ENCODE measurements at regions of chr12 and their contacts with region 1.

Region 1: GRCh38 chr12:84874125-84874824 is 38.3 kb downstream of the SLC6A15 start:
- DNase-seq: peak; percentile 5 to 43 (median 18)
- ATAC-seq: peak; percentile 76; the same call in 2 of the 3 replicates
- H3K4me3 ChIP-seq: no peak overlapping the region
- H3K27ac ChIP-seq: no peak overlapping the region
- H3K4me1 ChIP-seq: no peaks in the 10 kb centered on the region
- H3K27me3 ChIP-seq: no peaks in the 10 kb centered on the region
- CTCF ChIP-seq: peak; percentile 23 to 70 (median 49); a peak in 4 of 6 replicates
- EP300 ChIP-seq: no peak
- POLR2A ChIP-seq: no peak
- RAD21 ChIP-seq: peak; percentile 69 to 84

Region 2: DNA sequence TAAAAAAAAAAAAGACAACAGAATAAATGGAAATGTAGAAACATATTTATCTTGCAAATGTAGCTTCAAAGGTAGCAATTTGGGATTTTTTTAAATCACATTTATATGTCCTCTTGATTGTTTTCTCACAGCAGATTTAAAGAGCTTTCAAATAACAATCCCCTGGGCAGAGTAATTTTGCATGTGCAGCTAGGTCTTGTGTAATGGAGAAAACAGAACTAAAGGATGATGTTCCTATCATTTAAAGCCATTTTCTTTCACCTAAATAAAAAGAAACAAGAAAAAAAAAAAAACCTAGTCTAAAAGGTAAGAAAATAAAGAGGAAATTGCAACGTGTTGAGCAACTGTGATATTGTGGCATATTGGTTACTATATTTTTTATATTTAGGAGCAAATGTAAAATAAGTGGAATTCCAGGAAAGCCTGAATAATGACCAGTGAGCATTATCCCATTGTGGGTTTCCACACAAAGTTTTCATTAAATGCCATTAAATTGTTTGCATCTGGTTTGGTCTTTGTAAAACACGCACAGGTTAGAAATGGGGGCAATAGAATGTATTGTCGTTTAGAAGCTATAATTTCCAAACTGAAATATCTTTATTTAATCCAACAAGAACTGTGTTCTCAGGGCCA is 177.3 kb before region 1 on chr12:
- CTCF ChIA-PET with region 1: no interaction called
- POLR2A ChIA-PET with region 1: no interaction called
- in situ Hi-C with region 1: no loop called
- intact Hi-C with region 1: no loop called
- DNase-seq: no peak
- ATAC-seq: no peak
- H3K4me3 ChIP-seq: no peak overlapping the region
- H3K27ac ChIP-seq: no peak overlapping the region
- H3K4me1 ChIP-seq: no peaks in the 10 kb centered on the region
- H3K27me3 ChIP-seq: no peaks in the 10 kb centered on the region
- CTCF ChIP-seq: no peak
- EP300 ChIP-seq: no peak
- POLR2A ChIP-seq: no peak
- RAD21 ChIP-seq: no peak

Region 3: DNA sequence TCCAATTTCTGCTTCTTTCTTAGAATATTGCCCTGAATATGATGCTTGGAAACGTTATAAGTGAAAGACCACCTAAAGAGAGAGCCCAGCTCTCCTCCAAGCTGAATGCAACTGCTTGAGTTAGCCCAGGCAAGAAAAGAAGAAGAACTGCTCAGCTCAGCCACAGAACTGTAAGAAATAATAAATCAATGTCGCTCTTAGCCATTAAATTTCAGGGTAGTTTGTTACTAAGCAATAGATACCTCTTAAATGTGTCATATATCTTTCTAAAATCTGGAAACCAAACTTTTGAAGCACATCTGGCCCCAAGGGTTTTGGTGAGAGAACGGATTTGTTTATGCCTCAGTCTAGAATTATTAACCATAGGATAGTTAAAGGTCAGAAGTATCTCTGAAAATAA is 12.1 kb before region 1 on chr12:
- CTCF ChIA-PET with region 1: no interaction called
- POLR2A ChIA-PET with region 1: no interaction called
- in situ Hi-C with region 1: no loop called
- intact Hi-C with region 1: no loop called
- DNase-seq: no peak
- ATAC-seq: no peak
- H3K4me3 ChIP-seq: no peak overlapping the region
- H3K27ac ChIP-seq: no peak overlapping the region
- H3K4me1 ChIP-seq: no peaks in the 10 kb centered on the region
- H3K27me3 ChIP-seq: no peaks in the 10 kb centered on the region
- CTCF ChIP-seq: no peak
- EP300 ChIP-seq: no peak
- POLR2A ChIP-seq: no peak
- RAD21 ChIP-seq: no peak

Region 4: DNA sequence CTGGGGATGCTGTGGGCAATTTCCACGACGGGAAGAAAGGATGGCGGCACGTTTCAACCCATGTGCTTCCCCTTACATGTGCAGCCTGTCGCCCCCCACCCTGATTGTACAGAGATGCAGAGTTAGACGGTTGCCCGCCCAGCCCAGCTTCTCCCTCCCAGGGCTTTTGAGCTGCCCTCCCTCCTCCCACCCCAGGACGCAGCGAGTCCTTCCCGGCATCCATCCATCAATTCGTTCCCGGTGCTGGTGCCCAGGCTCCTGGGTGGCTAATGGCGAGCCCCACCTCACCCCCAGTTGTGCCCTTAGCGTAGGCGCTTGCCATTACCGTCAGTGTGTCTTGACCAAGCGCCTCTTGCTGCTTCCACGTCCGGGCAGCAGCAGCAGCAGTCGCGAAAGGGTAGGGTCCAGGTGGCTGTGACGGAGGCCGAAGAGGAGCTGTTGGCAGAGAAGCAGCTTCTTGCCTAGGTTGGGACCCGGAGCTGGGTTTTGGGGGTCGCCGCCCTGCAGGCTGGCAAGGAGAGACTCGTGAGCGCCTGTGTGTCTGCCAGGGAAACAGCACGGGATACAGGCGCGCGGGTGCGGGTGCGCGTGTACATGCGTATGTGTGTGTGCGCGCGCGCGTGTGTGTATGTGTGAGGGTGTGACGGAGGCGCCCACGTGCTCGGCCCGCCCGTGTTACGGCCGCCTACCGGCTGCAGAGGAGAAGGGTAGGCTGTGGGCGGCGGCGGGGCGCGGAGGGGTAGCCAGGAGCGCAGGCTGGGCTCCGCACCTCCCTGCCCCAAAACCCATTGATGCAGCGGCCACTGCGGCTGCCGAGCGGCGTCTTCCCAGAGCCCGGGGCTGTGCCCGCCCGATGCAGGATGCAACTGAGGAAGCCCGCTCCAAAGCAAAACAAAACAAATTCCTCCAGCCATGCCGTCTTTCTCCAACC is 38.2 kb after region 1 on chr12 and contains the start of gene SLC6A15:
- CTCF ChIA-PET with region 1: no interaction called
- POLR2A ChIA-PET with region 1: no interaction called
- in situ Hi-C with region 1: no loop called
- intact Hi-C with region 1: no loop called
- DNase-seq: no peak
- ATAC-seq: no peak
- H3K4me3 ChIP-seq: no peak within 1 kb of the TSS
- H3K27ac ChIP-seq: no peak within 1 kb of the TSS
- H3K4me1 ChIP-seq: no peaks in the 10 kb centered on the region
- H3K27me3 ChIP-seq: no peaks in the 10 kb centered on the region
- CTCF ChIP-seq: no peak
- EP300 ChIP-seq: no peak
- POLR2A ChIP-seq: no peak
- RAD21 ChIP-seq: no peak
- polyA plus RNA-seq, gene SLC6A15: not detected

Region 5: GRCh38 chr12:85029456-85029855 is 155.2 kb after region 1 on chr12:
- CTCF ChIA-PET with region 1: interaction called, 4 read pairs
- POLR2A ChIA-PET with region 1: no interaction called
- in situ Hi-C with region 1: no loop called
- intact Hi-C with region 1: loop called (anchors 1 kb)
- DNase-seq: peak in 2 of 4 experiments; percentile 1 to 7
- ATAC-seq: no peak
- H3K4me3 ChIP-seq: no peak overlapping the region
- H3K27ac ChIP-seq: no peak overlapping the region
- H3K4me1 ChIP-seq: no peaks in the 10 kb centered on the region
- H3K27me3 ChIP-seq: no peaks in the 10 kb centered on the region
- CTCF ChIP-seq: peak in 1 of 3 experiments; percentile 36; a peak in 2 of 6 replicates
- EP300 ChIP-seq: no peak
- POLR2A ChIP-seq: no peak
- RAD21 ChIP-seq: peak; percentile 33 to 43; a peak in 2 of 4 replicates

Region 6: GRCh38 chr12:85057370-85057963 is 183.2 kb after region 1 on chr12:
- CTCF ChIA-PET with region 1: no interaction called
- POLR2A ChIA-PET with region 1: no interaction called
- in situ Hi-C with region 1: no loop called
- intact Hi-C with region 1: loop called (anchors 1 kb)
- DNase-seq: peak; percentile 4 to 48 (median 16)
- ATAC-seq: no peak
- H3K4me3 ChIP-seq: no peak overlapping the region
- H3K27ac ChIP-seq: no peak overlapping the region
- H3K4me1 ChIP-seq: no peaks in the 10 kb centered on the region
- H3K27me3 ChIP-seq: no peaks in the 10 kb centered on the region
- CTCF ChIP-seq: peak; percentile 8 to 50 (median 44); a peak in 3 of 6 replicates
- EP300 ChIP-seq: no peak
- POLR2A ChIP-seq: no peak
- RAD21 ChIP-seq: peak in 1 of 2 experiments; percentile 52; a peak in 2 of 4 replicates

Region 7: GRCh38 chr12:85872497-85873091 is 998.3 kb after region 1 on chr12:
- CTCF ChIA-PET with region 1: no interaction called
- POLR2A ChIA-PET with region 1: no interaction called
- in situ Hi-C with region 1: no loop called
- intact Hi-C with region 1: loop called (anchors 5 kb)
- DNase-seq: peak in 2 of 4 experiments; percentile 2 to 46
- ATAC-seq: no peak
- H3K4me3 ChIP-seq: no peak overlapping the region
- H3K27ac ChIP-seq: no peak overlapping the region
- H3K4me1 ChIP-seq: no peaks in the 10 kb centered on the region
- H3K27me3 ChIP-seq: no peaks in the 10 kb centered on the region
- CTCF ChIP-seq: peak in 2 of 3 experiments; percentile 50 to 56; a peak in 4 of 6 replicates
- EP300 ChIP-seq: no peak
- POLR2A ChIP-seq: no peak
- RAD21 ChIP-seq: peak; percentile 21 to 57; a peak in 2 of 4 replicates

Region 8: GRCh38 chr12:85920324-85920947 is 1046.2 kb after region 1 on chr12:
- CTCF ChIA-PET with region 1: no interaction called
- POLR2A ChIA-PET with region 1: no interaction called
- in situ Hi-C with region 1: no loop called
- intact Hi-C with region 1: loop called (anchors 1 kb)
- DNase-seq: peak; percentile 2 to 12 (median 8)
- ATAC-seq: no peak
- H3K4me3 ChIP-seq: no peak overlapping the region
- H3K27ac ChIP-seq: no peak overlapping the region
- H3K4me1 ChIP-seq: no peaks in the 10 kb centered on the region
- H3K27me3 ChIP-seq: no peaks in the 10 kb centered on the region
- CTCF ChIP-seq: peak in 2 of 3 experiments; percentile 4 to 49; a peak in 2 of 6 replicates
- EP300 ChIP-seq: no peak
- POLR2A ChIP-seq: no peak
- RAD21 ChIP-seq: peak; percentile 51 to 66